CD14-positive monocyte (primary cell): ENCODE measurements at regions of chr12 and their contacts with region 1.

Region 1: GRCh38 chr12:116277393-116278278 is at the start of gene MED13L:
- DNase-seq: peak; percentile 87 to 90 (median 88)
- H3K4me3 ChIP-seq: peak within 1 kb of the TSS; percentile 83 to 98 (median 94)
- H3K4me3 Mint-ChIP-seq: peak within 1 kb of the TSS; percentile 93 to 99
- H3K27ac ChIP-seq: peak within 1 kb of the TSS; percentile 86 to 94
- H3K27ac Mint-ChIP-seq: peak within 1 kb of the TSS; percentile 95 to 98 (median 96)
- H3K4me1 ChIP-seq: peaks cover 57 to 78% of the 10 kb centered on the region in 2 donors
- H3K4me1 Mint-ChIP-seq: peaks cover 66% of the 10 kb centered on the region
- H3K27me3 ChIP-seq: no peaks in the 10 kb centered on the region
- H3K27me3 Mint-ChIP-seq: peaks cover 0 to 1% (median 1%) of the 10 kb centered on the region in 3 donors
- CTCF ChIP-seq: peak; percentile 37
- polyA plus RNA-seq, gene MED13L: 4.4 to 42.0 (median 7.5) TPM

Region 2: DNA sequence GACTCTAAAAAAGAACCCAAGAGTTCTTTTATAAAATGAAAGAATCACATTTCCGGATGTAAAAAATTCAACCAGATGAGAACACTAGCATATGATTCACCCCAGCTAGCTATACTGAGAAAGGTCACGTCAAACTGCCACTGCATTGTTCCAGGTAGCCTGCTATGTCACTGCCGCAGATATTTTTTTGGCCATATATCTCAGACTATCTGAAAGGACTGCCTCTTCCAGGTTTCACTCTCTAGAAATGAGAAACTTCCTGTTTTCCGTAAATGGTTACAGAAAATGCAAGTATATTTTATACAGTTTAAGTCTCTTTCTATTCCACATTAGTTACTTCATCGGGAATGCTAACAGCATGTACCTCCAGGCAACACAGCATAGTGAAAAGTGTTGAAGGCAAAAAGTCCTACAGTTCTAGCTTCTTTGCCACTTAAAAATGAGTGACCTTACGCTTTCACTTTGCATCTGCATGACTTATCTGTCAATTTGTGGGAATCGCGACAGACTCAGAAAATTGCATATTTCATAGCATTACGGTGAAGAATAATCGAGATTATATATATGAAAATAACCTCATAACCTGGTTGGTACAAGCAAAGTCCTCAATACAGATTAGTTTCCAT is 105.3 kb before region 1 on chr12:
- intact Hi-C with region 1: no loop called
- DNase-seq: peak; percentile 24 to 48 (median 43)
- H3K4me3 ChIP-seq: peak overlapping the region in 2 of 3 experiments; percentile 31 to 60
- H3K4me3 Mint-ChIP-seq: peak overlapping the region; percentile 52 to 65
- H3K27ac ChIP-seq: peak overlapping the region in 1 of 2 donors; percentile 49
- H3K27ac Mint-ChIP-seq: peak overlapping the region; percentile 5 to 74 (median 29)
- H3K4me1 ChIP-seq: peaks cover 12 to 17% of the 10 kb centered on the region in 2 donors
- H3K4me1 Mint-ChIP-seq: peaks cover 40% of the 10 kb centered on the region
- H3K27me3 ChIP-seq: no peaks in the 10 kb centered on the region
- H3K27me3 Mint-ChIP-seq: no peaks in the 10 kb centered on the region
- CTCF ChIP-seq: no peak

Region 3: GRCh38 chr12:116406516-116406915 is 128.9 kb after region 1 on chr12:
- intact Hi-C with region 1: loop called in 1 of 2 experiments (anchors 10 kb)
- DNase-seq: peak; percentile 92 to 96 (median 95)
- H3K4me3 ChIP-seq: no peak overlapping the region
- H3K4me3 Mint-ChIP-seq: peak overlapping the region in 1 of 2 donors; percentile 21
- H3K27ac ChIP-seq: peak overlapping the region; percentile 77 to 82
- H3K27ac Mint-ChIP-seq: peak overlapping the region; percentile 88 to 96 (median 90)
- H3K4me1 ChIP-seq: peaks cover 67 to 74% of the 10 kb centered on the region in 2 donors
- H3K4me1 Mint-ChIP-seq: peaks cover 67% of the 10 kb centered on the region
- H3K27me3 ChIP-seq: no peaks in the 10 kb centered on the region
- H3K27me3 Mint-ChIP-seq: peaks cover 0 to 5% (median 3%) of the 10 kb centered on the region in 3 donors
- CTCF ChIP-seq: no peak

Region 4: GRCh38 chr12:116559162-116559935 is 281.7 kb after region 1 on chr12 and contains the start of gene MAP1LC3B2:
- intact Hi-C with region 1: loop called in 1 of 2 experiments (anchors 10 kb)
- DNase-seq: peak; percentile 97 to 98 (median 97)
- H3K4me3 ChIP-seq: peak within 1 kb of the TSS in 2 of 3 experiments; percentile 17 to 25
- H3K4me3 Mint-ChIP-seq: peak within 1 kb of the TSS; percentile 74 to 82
- H3K27ac ChIP-seq: peak within 1 kb of the TSS; percentile 98 to 100
- H3K27ac Mint-ChIP-seq: peak within 1 kb of the TSS; percentile 100
- H3K4me1 ChIP-seq: peaks cover 49% of the 10 kb centered on the region in 2 donors
- H3K4me1 Mint-ChIP-seq: peaks cover 57% of the 10 kb centered on the region
- H3K27me3 ChIP-seq: no peaks in the 10 kb centered on the region
- H3K27me3 Mint-ChIP-seq: peaks cover 0 to 2% (median 0%) of the 10 kb centered on the region in 3 donors
- CTCF ChIP-seq: no peak
- polyA plus RNA-seq, gene MAP1LC3B2: 2.6 to 12.9 (median 6.4) TPM

Region 5: DNA sequence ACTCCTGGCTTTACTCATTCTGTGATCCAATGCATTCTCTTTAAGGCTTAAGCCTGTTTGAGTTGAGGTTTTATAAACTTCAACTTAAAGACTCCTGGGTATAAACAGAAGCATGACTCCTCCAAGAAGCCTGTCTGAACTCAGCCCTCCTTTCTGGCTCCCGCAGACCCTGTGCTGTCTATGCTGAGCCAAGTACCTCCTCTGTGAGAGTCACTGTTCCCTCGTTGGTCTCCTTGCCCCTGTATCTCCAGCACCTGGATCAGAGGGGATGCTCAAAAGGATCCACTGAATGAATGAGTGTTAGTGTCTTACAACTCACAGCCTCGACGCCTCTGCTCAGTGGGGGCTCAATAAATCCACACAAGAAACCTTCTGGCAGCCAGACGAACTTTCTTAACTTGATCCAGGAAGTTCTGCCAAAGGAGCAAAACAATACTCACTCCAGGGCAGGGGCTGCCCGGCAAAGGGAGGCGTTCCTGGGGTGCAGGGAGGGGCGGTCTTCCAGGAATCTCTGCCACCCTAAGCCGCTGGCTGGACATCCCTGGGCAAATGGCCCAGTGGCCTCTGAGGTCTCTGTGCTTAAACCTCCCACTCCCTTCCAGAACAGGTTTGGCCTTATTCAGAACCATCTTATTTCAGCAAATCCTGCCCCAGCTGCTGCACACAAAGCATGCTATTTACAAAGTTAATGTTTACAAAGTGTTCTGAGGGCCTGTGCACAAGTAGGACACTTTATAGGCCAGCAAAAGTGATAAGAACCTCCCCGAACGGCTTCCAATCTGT is 314.4 kb after region 1 on chr12:
- intact Hi-C with region 1: loop called (anchors 5 to 10 kb)
- DNase-seq: no peak
- H3K4me3 ChIP-seq: no peak overlapping the region
- H3K4me3 Mint-ChIP-seq: no peak overlapping the region
- H3K27ac ChIP-seq: peak overlapping the region; percentile 89 to 99
- H3K27ac Mint-ChIP-seq: peak overlapping the region; percentile 89 to 100 (median 99)
- H3K4me1 ChIP-seq: peaks cover 45 to 50% of the 10 kb centered on the region in 2 donors
- H3K4me1 Mint-ChIP-seq: peaks cover 44% of the 10 kb centered on the region
- H3K27me3 ChIP-seq: no peaks in the 10 kb centered on the region
- H3K27me3 Mint-ChIP-seq: peaks cover 0 to 1% (median 0%) of the 10 kb centered on the region in 3 donors
- CTCF ChIP-seq: no peak

Region 6: GRCh38 chr12:116599285-116600136 is 321.9 kb after region 1 on chr12:
- intact Hi-C with region 1: loop called (anchors 5 to 10 kb)
- DNase-seq: peak; percentile 70 to 73 (median 71)
- H3K4me3 ChIP-seq: peak overlapping the region in 2 of 3 experiments; percentile 22 to 56
- H3K4me3 Mint-ChIP-seq: peak overlapping the region; percentile 53 to 59
- H3K27ac ChIP-seq: peak overlapping the region in 1 of 2 donors; percentile 86
- H3K27ac Mint-ChIP-seq: peak overlapping the region; percentile 46 to 94 (median 88)
- H3K4me1 ChIP-seq: peaks cover 38 to 44% of the 10 kb centered on the region in 2 donors
- H3K4me1 Mint-ChIP-seq: peaks cover 59% of the 10 kb centered on the region
- H3K27me3 ChIP-seq: no peaks in the 10 kb centered on the region
- H3K27me3 Mint-ChIP-seq: peaks cover 0 to 1% (median 0%) of the 10 kb centered on the region in 3 donors
- CTCF ChIP-seq: peak; percentile 70